ENCODE measurements at regions of chr15 and their contacts with region 1.

Region 1: DNA sequence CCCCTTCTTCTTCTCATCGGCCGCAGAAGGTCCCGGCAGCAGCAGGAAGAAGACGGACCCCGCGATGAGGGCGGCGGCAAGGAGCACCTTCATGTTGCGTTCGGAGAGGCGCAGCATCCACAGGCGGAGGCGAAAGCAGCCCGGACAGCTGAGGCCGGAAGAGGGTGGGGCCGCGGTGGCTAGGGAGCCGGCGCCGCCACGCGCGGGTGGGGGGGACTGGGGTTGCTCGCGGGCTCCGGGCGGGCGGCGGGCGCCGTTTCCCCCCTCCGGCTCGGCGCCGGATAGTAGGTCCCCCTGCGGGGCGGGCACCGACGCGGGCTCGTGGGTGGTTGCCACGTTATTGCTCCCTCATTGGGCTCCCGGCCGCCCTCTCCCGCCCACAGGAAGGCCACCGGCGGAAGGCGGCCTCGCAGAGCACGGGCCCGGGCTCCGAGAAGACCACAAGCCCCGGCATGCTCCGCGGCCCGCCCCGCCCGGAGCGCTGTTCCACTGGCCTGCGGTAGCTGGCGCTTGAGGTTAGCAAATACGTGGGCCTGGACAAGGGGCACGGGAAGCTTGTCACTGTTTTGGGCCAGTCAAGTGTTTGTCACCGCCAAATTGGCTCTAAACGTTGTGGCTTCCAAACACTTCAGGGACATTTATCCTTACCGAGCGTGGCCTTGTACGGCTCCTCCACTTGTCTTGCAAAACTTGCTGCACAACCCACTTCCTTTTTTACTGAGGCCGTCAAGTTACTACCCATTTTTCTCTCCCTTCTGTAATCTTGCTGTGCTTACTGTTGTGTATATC is at the start of gene PPIB:
- DNase-seq: peak; percentile 95 to 98 (median 96)
- ATAC-seq: peak; percentile 98
- H3K4me3 ChIP-seq: peak within 1 kb of the TSS; percentile 92
- H3K27ac ChIP-seq: peak within 1 kb of the TSS; percentile 93
- H3K4me1 ChIP-seq: peaks cover 16 to 27% of the 10 kb centered on the region in 2 experiments; a peak in 3 of 5 replicates
- H3K27me3 ChIP-seq: no peaks in the 10 kb centered on the region
- CTCF ChIP-seq: peak; percentile 82 to 88 (median 86)
- EP300 ChIP-seq: no peak
- POLR2A ChIP-seq: peak; percentile 98
- RAD21 ChIP-seq: peak; percentile 61 to 80
- polyA plus RNA-seq, gene PPIB: 652 to 746 TPM

Region 2: DNA sequence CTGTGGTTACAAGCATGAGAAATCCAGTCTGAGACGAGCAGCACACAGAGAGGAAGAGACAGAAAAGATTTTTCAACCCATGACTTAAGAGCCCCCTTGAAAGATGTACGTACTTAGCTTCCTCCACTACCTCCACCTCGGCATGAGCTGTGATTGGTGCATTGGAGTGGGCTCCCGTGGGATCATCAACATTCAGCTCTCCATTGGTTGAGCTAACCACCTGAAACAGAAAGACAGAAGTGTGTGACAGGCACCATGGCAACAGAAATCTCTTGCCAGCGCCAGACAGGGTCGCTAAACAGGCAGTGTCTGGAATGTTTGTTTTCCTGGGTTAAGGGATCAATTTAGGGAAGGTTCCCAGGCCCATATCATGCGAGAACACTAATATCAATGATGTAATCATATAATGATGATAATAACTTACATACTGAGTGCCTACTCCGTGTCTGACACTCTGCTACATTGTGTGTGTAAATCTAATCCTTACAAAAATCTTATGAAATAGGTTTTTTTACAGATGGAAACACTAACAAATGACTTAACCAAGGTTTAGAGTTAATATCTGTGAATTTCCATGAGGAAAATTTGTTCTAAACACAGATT is 17.3 kb after region 1 on chr15:
- CTCF ChIA-PET with region 1: no interaction called
- POLR2A ChIA-PET with region 1: interaction called, 11 read pairs
- in situ Hi-C with region 1: no loop called
- intact Hi-C with region 1: no loop called
- DNase-seq: no peak
- ATAC-seq: no peak
- H3K4me3 ChIP-seq: no peak overlapping the region
- H3K27ac ChIP-seq: no peak overlapping the region
- H3K4me1 ChIP-seq: peaks cover 0 to under 1% of the 10 kb centered on the region in 2 experiments; a peak in 1 of 5 replicates
- H3K27me3 ChIP-seq: no peaks in the 10 kb centered on the region
- CTCF ChIP-seq: no peak
- EP300 ChIP-seq: no peak
- POLR2A ChIP-seq: no peak
- RAD21 ChIP-seq: no peak

Region 3: GRCh38 chr15:64355944-64356709 is 193.1 kb after region 1 on chr15 and contains the start of gene CSNK1G1:
- CTCF ChIA-PET with region 1: no interaction called
- POLR2A ChIA-PET with region 1: interaction called, 9 read pairs
- in situ Hi-C with region 1: no loop called
- intact Hi-C with region 1: loop called (anchors 1 kb)
- DNase-seq: peak; percentile 89 to 99 (median 92)
- ATAC-seq: peak; percentile 98
- H3K4me3 ChIP-seq: peak within 1 kb of the TSS; percentile 82
- H3K27ac ChIP-seq: peak within 1 kb of the TSS; percentile 77
- H3K4me1 ChIP-seq: peaks cover 7 to 13% of the 10 kb centered on the region in 2 experiments; a peak in 4 of 5 replicates
- H3K27me3 ChIP-seq: no peaks in the 10 kb centered on the region
- CTCF ChIP-seq: peak; percentile 45 to 92 (median 92); a peak in 4 of 6 replicates
- EP300 ChIP-seq: no peak
- POLR2A ChIP-seq: peak; percentile 74
- RAD21 ChIP-seq: peak; percentile 76 to 78
- polyA plus RNA-seq, gene CSNK1G1: 4.5 to 4.9 TPM

Region 4: DNA sequence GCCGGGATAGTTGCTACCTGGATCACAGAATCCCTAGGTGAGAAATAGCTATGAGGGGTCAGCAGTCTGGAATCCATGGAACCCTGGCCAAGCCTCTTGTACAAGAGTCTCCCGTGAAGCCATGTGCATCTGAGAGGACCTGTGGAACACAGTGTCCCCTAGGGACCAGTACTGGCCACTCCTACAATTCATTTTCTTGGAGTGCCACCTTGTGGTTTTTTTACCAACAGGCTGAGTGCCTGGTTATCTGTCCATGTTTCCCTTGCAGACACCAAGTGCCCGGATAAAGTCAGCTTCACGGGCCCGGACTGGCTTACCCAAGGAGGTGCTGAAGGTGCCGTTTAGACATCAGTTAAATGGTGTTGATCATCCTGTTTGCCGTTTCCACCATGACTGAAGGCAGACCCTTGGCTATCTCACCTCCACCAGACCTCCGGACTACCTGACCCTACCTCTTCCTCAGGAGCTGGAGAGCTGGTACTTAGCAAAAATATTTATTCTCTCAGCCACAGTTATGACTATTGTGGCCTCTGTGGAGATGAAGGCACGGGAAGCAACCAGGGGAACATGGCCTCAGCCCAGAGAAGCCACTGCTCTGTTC is 518.5 kb after region 1 on chr15:
- CTCF ChIA-PET with region 1: interaction called, 15 read pairs
- POLR2A ChIA-PET with region 1: no interaction called
- in situ Hi-C with region 1: no loop called
- intact Hi-C with region 1: loop called (anchors 5 kb)
- DNase-seq: peak; percentile 60 to 80 (median 70)
- ATAC-seq: peak; percentile 98
- H3K4me3 ChIP-seq: no peak overlapping the region
- H3K27ac ChIP-seq: no peak overlapping the region
- H3K4me1 ChIP-seq: no peaks in the 10 kb centered on the region; a peak in 1 of 5 replicates
- H3K27me3 ChIP-seq: no peaks in the 10 kb centered on the region
- CTCF ChIP-seq: peak; percentile 91 to 100 (median 99)
- EP300 ChIP-seq: 0 out of 2 replicates have a peak, but pooled peaks have one; percentile 5
- POLR2A ChIP-seq: no peak
- RAD21 ChIP-seq: peak; percentile 93 to 98